ENCODE measurements at regions of chr15 and their contacts with region 1.

Region 1: DNA sequence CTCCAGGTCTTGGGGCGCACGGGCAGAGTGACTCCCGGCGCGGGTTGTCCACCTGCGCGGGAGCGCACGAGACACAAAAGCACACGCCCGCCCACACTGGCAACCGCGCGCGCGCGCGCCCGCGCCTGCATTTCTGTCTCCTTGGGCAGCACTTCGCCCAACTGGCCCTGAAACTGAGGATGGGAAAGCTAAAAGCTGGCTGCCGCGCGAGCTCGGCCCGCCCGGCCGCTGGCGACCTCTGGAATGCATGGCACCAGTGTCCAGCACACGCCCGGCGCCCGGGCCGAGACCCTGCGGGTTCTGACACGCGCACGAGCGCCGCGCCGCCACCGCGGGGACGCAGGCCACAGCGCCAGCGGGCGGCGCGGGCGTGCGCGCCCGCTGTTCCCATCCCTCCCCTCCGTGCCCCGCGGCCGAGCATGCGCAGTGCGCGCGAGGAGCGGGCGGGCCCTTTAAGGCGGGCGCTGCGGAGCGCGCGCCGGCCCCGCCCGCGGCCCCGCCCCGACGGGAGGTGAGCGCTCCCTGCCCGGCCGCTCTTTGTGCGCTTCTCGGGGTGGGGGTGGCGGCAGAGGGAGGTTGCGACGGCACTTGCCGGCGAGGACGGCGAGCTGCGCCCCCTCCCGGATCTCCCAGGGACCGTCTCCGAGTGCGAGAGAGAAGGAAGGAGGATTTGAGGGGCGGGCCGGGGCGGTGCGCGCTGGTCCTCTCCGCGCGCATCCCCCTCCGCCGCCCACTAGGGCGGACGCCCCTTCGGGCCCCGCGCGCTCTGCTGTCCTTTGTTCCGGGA is 1.0 kb upstream of the MEX3B start:
- DNase-seq: peak; percentile 98 to 100
- H3K4me3 ChIP-seq: peak overlapping the region; percentile 83
- H3K4me1 ChIP-seq: peaks cover 10% of the 10 kb centered on the region
- H3K27me3 ChIP-seq: peaks cover 17% of the 10 kb centered on the region; the same call in 1 of the 2 replicates

Region 2: GRCh38 chr15:80989518-80990478 is 1057.1 kb before region 1 on chr15 and contains the start of gene MESD:
- in situ Hi-C with region 1: loop called (anchors 10 kb)
- DNase-seq: peak; percentile 100
- H3K4me3 ChIP-seq: peak within 1 kb of the TSS; percentile 98
- H3K4me1 ChIP-seq: peaks cover 48% of the 10 kb centered on the region
- H3K27me3 ChIP-seq: no peaks in the 10 kb centered on the region